Sigmoid colon (tissue), 7 donors: ENCODE measurements at regions of chr10 and their contacts with region 1.

Region 1: DNA sequence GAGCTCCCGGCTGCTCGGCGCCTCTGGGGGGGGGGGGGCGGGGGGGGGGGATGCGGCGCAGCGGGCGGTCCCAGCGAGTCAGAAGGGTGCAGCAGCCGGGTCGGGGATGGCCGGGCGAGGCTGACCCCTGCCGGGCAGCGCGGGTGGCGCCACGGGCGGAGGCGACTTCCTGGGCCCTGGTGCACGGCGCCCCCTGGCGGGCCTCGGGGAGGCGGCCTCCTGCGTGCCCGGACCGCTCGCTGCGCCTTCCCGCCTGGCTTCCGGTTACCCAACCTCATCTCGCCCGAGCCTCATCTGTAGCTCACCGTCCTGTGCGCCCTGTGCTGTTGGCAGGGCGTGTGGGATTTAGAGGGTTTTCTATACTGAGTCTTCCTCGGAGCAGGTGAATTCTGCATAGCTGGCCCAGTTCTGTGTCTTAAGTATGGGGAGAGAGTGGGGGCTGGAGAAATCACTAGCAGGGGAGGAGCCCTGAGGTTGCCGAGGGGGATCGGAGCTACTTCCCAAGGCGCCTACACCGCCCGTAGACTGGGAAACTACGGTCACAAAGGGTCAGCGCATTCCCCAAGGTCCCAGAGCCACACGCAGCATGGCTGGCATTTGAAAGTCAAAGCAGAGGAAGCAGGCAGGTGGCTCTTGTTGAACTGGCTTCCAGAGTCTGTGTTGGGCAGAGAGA is 28.3 kb upstream of the WDFY4 start:
- DNase-seq: peak; percentile 93
- H3K4me3 ChIP-seq: peak overlapping the region; percentile 27 to 54 (median 47)
- H3K27ac ChIP-seq: peak overlapping the region; percentile 45 to 64 (median 60)
- H3K4me1 ChIP-seq: peaks cover 0 to 16% (median 15%) of the 10 kb centered on the region in 4 donors
- H3K27me3 ChIP-seq: peaks cover 0 to 5% (median 0%) of the 10 kb centered on the region in 3 donors
- CTCF ChIP-seq: peak; percentile 43 to 98 (median 66)
- EP300 ChIP-seq: no peak
- POLR2A ChIP-seq: no peak

Region 2: DNA sequence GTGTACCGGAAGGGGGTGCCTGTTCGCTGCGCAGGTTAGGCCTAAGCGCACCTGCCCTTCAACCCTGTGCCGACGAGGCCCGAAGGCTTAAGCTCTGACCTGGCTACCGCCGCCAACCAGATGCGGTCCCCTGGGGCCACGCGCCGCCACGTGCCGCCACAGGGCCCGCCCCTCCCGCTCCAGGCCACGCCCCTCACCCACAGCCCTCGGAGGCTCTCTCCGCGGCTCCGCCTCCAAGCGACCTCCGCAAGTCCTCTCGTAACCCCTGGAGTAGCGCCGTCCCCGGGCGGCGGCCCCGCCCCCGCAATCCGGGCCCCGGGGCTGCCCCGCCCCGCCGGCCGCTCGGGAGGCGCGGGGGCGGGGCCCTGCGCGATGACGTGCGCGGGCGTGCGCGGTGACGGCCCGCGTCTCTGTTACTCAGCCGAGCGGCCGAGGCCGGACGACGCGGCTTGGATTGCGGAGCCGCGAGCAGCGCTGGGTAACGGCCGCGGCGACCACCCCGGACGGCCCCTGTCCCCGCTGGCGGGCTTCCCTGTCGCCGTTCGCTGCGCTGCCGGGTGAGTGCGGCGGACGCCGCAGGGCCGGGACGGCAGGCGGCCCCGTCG is 350.0 kb before region 1 on chr10 and contains the start of gene MAPK8:
- intact Hi-C with region 1: loop called (anchors 5 kb)
- DNase-seq: peak; percentile 95
- H3K4me3 ChIP-seq: peak within 1 kb of the TSS; percentile 86 to 98 (median 96)
- H3K27ac ChIP-seq: peak within 1 kb of the TSS; percentile 97 to 98 (median 98)
- H3K4me1 ChIP-seq: peaks cover 0 to 44% (median 24%) of the 10 kb centered on the region in 4 donors
- H3K27me3 ChIP-seq: no peaks in the 10 kb centered on the region
- CTCF ChIP-seq: no peak
- EP300 ChIP-seq: no peak
- POLR2A ChIP-seq: peak in 1 of 2 donors; percentile 55
- total RNA-seq, gene MAPK8: 46.7 to 74.5 (median 60.6) TPM

Region 3: GRCh38 chr10:48363617-48364355 is 292.6 kb before region 1 on chr10:
- intact Hi-C with region 1: loop called (anchors 1 kb)
- DNase-seq: no peak
- H3K4me3 ChIP-seq: no peak overlapping the region
- H3K27ac ChIP-seq: no peak overlapping the region
- H3K4me1 ChIP-seq: peaks cover 0 to 34% (median 19%) of the 10 kb centered on the region in 4 donors
- H3K27me3 ChIP-seq: no peaks in the 10 kb centered on the region
- CTCF ChIP-seq: peak; percentile 20 to 57 (median 48)
- EP300 ChIP-seq: no peak
- POLR2A ChIP-seq: no peak

Region 4: GRCh38 chr10:48551861-48552591 is 104.4 kb before region 1 on chr10:
- intact Hi-C with region 1: loop called (anchors 2 kb)
- DNase-seq: no peak
- H3K4me3 ChIP-seq: no peak overlapping the region
- H3K27ac ChIP-seq: no peak overlapping the region
- H3K4me1 ChIP-seq: peaks cover 0 to 31% (median 20%) of the 10 kb centered on the region in 4 donors
- H3K27me3 ChIP-seq: no peaks in the 10 kb centered on the region
- CTCF ChIP-seq: peak in 3 of 4 experiments; percentile 52 to 67 (median 67)
- EP300 ChIP-seq: no peak
- POLR2A ChIP-seq: no peak

Region 5: GRCh38 chr10:49164559-49165188 is 508.3 kb after region 1 on chr10:
- intact Hi-C with region 1: loop called (anchors 10 kb)
- DNase-seq: no peak
- H3K4me3 ChIP-seq: no peak overlapping the region
- H3K27ac ChIP-seq: no peak overlapping the region
- H3K4me1 ChIP-seq: no peaks in the 10 kb centered on the region
- H3K27me3 ChIP-seq: no peaks in the 10 kb centered on the region
- CTCF ChIP-seq: peak in 3 of 4 experiments; percentile 36 to 59 (median 55)
- EP300 ChIP-seq: no peak
- POLR2A ChIP-seq: no peak

Region 6: GRCh38 chr10:49518982-49519578 is 862.7 kb after region 1 on chr10:
- intact Hi-C with region 1: loop called (anchors 10 kb)
- DNase-seq: no peak
- H3K4me3 ChIP-seq: no peak overlapping the region
- H3K27ac ChIP-seq: no peak overlapping the region
- H3K4me1 ChIP-seq: no peaks in the 10 kb centered on the region
- H3K27me3 ChIP-seq: no peaks in the 10 kb centered on the region
- CTCF ChIP-seq: peak in 3 of 4 experiments; percentile 35 to 61 (median 45)
- EP300 ChIP-seq: no peak
- POLR2A ChIP-seq: no peak